AG04450 (cell line): ENCODE measurements at regions of chr6 and their contacts with region 1.

Region 1: GRCh38 chr6:29649701-29650673 is 6.9 kb upstream of the MOG start:
- DNase-seq: peak; percentile 86
- H3K4me3 ChIP-seq: peak overlapping the region; percentile 66
- H3K27ac ChIP-seq: peak overlapping the region; percentile 43
- H3K27me3 ChIP-seq: peaks cover 3% of the 10 kb centered on the region
- CTCF ChIP-seq: peak; percentile 92

Region 2: GRCh38 chr6:29611426-29611825 is 38.6 kb before region 1 on chr6:
- CTCF ChIA-PET with region 1: interaction called, 14 read pairs
- POLR2A ChIA-PET with region 1: no interaction called
- DNase-seq: no peak
- H3K4me3 ChIP-seq: no peak overlapping the region
- H3K27ac ChIP-seq: no peak overlapping the region
- H3K27me3 ChIP-seq: no peaks in the 10 kb centered on the region
- CTCF ChIP-seq: no peak

Region 3: GRCh38 chr6:29632789-29633533 is 17.0 kb before region 1 on chr6 and contains the start of gene GABBR1:
- CTCF ChIA-PET with region 1: interaction called, 281 read pairs
- POLR2A ChIA-PET with region 1: interaction called, 12 read pairs
- DNase-seq: peak; percentile 63
- H3K4me3 ChIP-seq: peak within 1 kb of the TSS; percentile 79
- H3K27ac ChIP-seq: peak within 1 kb of the TSS; percentile 47
- H3K27me3 ChIP-seq: no peaks in the 10 kb centered on the region
- CTCF ChIP-seq: no peak
- polyA plus RNA-seq, gene GABBR1: 14.6 and 16.5 TPM in 2 replicates

Region 4: GRCh38 chr6:29676981-29677601 is 27.1 kb after region 1 on chr6:
- CTCF ChIA-PET with region 1: interaction called, 24 read pairs
- POLR2A ChIA-PET with region 1: no interaction called
- DNase-seq: no peak
- H3K4me3 ChIP-seq: no peak overlapping the region
- H3K27ac ChIP-seq: no peak overlapping the region
- H3K27me3 ChIP-seq: no peaks in the 10 kb centered on the region
- CTCF ChIP-seq: no peak

Region 5: DNA sequence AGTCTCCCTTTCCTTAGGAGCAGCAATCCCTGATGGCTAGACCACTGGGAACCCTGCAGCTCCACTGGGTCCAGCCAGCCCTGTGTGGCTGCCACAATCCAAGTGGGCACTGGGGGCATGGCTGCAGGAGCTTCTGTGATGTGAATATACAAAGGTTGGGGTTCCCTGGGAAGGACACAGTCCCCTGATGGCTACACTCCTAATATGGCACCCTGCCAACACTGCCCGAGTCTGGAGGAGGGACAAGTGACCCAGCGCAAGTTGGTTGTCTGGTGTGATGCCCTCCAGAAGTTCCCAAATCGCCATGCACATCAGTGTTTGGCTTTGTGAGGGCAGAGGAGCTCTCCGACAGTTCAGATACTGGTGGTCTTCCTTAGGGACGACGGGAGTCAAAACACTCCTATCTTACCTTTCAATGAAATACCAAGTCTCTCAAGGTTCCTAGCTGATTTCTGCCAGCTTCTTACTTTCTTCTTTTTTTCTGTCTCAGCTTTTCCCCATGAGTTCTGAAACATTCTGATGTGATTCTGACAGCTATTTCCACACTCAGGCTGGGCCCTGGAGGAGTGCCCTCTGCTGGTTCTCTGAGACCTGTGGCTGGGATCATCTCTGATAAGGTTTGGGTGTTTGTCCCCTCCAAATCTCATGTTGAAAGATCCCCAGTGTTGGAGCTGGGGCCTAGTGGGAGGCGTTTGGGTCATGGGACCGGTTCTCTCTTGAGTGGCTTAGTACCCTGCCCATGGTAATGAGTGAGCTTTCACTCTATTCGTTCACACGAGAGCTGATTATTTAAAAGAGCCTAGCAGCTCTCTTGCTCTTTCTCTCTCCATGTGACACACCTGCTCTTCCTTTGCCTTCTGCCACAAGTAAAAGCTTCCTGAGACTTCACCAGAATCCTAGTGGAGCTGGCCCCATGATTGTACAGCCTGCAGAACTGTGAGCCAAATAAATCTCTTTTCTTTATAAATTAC is 46.5 kb after region 1 on chr6:
- CTCF ChIA-PET with region 1: interaction called, 39 read pairs
- POLR2A ChIA-PET with region 1: no interaction called
- DNase-seq: no peak
- H3K4me3 ChIP-seq: no peak overlapping the region
- H3K27ac ChIP-seq: no peak overlapping the region
- H3K27me3 ChIP-seq: no peaks in the 10 kb centered on the region
- CTCF ChIP-seq: peak; percentile 51

Region 6: DNA sequence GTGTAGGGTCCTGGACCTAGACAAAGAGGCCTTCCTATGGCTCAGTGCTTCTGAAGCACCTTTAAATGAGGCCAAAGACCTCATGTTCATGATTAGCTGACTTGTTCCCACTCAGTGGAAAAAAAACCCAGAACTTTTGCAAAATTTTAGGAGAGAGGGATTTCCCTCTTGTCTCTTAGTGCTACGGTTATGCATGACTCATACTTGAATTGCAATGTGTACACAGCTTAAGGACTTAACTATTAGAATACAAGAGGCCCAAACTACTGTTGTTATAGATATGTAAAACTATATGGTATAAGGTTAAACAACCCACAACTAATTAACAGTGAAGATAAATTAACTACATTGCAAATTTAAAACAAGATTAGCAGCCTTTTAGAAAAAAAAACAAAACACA is 260.0 kb after region 1 on chr6:
- CTCF ChIA-PET with region 1: no interaction called
- POLR2A ChIA-PET with region 1: no interaction called
- DNase-seq: no peak
- H3K4me3 ChIP-seq: no peak overlapping the region
- H3K27ac ChIP-seq: no peak overlapping the region
- H3K27me3 ChIP-seq: peaks cover 6% of the 10 kb centered on the region
- CTCF ChIP-seq: no peak

Region 7: DNA sequence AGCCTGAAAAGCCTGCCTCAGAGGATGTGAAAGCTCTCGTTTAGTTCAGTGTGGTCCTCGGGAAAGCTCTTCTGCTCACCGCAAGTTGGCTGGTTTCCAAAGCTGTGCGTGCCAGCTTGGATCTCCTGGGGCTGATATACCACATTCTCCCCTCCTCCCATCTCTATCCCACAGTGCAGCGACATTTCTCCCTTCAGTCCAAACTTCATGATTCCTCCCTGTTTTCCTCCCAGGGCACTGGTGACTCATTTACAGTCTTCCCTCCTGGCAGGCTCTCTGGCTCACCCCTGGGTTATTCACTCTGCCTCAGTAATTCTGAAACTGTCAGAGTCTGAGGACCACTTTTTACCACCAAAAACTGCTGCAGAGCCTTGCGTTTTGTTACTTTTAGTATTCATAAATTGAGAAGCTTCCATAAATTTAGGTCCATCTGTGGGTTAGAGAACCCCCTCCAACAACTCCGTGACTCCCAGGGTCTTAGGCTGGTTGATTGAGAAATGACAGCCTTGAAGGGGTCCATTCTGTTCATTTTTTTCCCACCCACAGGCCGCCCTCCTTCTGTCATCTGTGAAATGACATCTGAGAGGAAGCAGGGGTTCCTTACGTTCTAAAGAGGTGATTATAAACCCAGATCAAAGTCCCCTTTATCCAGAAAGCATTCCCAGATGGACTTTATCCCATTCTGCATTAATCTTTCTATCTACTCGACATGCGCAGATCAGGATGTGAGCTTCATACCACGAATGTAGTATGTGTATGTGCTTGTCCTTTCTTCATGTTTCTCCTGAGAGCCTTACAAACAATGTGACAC is 504.9 kb after region 1 on chr6:
- CTCF ChIA-PET with region 1: no interaction called
- POLR2A ChIA-PET with region 1: no interaction called
- DNase-seq: no peak
- H3K4me3 ChIP-seq: no peak overlapping the region
- H3K27ac ChIP-seq: no peak overlapping the region
- H3K27me3 ChIP-seq: peaks cover 12% of the 10 kb centered on the region
- CTCF ChIP-seq: no peak